Upper lobe of right lung (tissue), 1 donor: ENCODE measurements at regions of chr19 and their contacts with region 1.

Region 1: GRCh38 chr19:1189419-1189818 is 15.4 kb upstream of the SBNO2 start:
- DNase-seq: no peak
- ATAC-seq: peak; percentile 79
- H3K4me3 ChIP-seq: no peak overlapping the region
- H3K27ac ChIP-seq: no peak overlapping the region
- H3K4me1 ChIP-seq: no peaks in the 10 kb centered on the region
- H3K27me3 ChIP-seq: no peaks in the 10 kb centered on the region
- CTCF ChIP-seq: no peak

Region 2: DNA sequence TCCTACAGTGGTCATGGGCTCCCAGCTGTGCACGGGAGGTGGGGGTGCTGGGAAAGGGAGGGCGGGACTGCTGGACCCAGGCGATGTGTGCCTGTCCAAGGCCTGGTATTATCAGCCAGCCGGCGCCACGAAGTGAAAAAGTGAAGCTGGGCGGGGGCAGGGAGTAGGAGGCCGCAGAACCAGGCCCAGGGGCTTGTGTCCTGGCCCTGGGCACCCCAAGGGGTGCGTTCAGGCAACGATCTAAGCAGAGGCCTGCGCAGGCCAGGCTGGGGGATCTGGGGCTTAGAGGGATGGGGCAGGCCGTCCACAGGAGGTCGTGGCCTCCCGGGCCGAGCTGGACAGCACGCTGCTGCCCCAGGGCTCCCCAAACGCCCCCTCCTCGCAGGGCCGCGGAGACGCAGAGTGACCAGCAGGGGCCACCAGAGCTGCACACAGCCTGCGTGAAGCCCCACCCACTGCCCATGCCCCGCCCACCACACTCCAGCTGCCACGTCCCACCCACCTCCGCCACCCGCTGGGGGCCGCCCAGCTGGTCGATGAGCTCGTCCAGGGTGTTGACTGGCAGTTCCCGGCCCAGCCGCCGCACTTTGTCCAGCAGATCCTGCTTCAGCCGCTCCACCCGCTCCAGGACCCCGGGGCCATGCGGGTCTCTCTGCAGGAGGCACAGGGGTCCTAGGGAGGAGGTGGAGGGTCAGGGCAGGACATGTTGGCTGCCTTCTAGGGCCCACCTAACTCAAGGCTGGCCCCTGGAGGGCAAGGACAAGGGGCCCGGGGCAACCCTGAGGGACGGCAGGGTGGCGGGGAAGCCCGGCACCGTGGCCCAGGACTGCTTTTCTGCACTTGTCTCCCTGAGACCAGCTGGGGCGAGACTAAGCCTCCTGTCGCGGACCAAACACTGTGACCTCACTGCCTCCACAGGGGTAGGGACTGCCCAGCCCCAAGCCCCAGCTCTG is 76.1 kb before region 1 on chr19:
- intact Hi-C with region 1: loop called (anchors 5 kb)
- DNase-seq: peak; percentile 97
- ATAC-seq: peak; percentile 91
- H3K4me3 ChIP-seq: peak overlapping the region; percentile 14
- H3K27ac ChIP-seq: peak overlapping the region; percentile 74
- H3K4me1 ChIP-seq: peaks cover 11% of the 10 kb centered on the region
- H3K27me3 ChIP-seq: no peaks in the 10 kb centered on the region
- CTCF ChIP-seq: peak; percentile 89